Heart right ventricle (tissue), 16 donors: ENCODE measurements at regions of chr11 and their contacts with region 1.

Region 1: DNA sequence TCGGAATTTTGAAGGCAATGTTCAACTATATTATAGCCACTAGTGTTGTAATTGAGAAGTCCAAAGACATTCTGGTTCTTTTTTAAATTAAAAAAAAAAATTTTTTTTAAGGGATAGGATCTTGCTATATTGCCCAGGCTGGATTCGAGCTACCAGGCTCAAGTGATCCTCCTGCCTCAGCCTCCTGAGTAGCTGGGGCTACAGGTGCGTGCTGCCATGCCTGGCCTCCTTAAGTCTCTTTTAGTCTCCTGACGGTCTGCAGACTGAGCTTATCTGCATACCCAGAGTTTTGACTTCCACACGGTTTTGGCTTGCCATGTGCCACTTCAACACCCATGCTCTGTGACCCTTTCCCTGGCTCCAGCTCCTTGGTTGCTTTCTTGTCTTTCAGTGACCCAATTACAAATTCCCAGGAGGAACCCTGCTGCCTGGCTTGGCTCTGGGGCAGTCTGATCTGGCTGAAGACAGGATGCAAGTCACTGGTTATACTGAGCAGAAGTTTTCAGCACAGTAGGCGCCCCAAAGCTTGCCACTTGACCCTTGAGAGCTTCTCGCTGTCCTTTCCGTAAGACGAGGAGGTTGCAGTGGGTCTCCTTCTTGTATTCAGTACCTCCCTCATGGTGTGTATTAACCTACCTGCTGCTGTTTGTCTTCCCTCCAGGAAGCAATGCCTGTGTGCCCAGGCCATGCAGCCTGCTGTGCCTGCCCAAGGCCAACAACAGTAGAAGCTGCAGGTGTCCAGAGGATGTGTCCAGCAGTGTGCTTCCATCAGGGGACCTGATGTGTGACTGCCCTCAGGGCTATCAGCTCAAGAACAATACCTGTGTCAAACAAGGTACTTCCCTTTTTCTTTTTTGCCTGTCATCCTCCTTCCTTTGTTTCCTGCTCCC is 113.8 kb upstream of the SORL1-AS1 start:
- DNase-seq: no peak
- ATAC-seq: no peak
- H3K4me3 ChIP-seq: no peak overlapping the region
- H3K27ac ChIP-seq: no peak overlapping the region
- H3K4me1 ChIP-seq: no peaks in the 10 kb centered on the region
- H3K27me3 ChIP-seq: no peaks in the 10 kb centered on the region
- CTCF ChIP-seq: no peak

Region 2: DNA sequence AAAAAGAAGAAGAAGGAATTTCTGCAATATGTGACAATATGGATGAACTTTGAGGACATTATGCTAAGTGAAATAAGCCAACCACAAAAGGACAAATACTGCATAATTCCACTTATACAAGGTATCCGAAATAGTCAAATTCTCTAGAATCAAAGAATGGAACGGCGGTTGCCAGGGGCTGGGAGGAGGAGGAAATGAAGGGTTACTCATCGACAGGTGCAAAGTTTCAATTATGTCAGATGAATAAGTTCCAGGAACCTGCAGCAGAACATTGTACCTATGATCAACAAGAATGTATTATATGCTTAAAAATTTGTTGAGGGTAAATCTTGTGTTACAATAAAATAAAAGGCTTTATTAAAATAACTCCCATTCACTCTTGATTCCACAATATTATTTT is 224.9 kb before region 1 on chr11:
- intact Hi-C with region 1: no loop called
- DNase-seq: no peak
- ATAC-seq: no peak
- H3K4me3 ChIP-seq: no peak overlapping the region
- H3K27ac ChIP-seq: no peak overlapping the region
- H3K4me1 ChIP-seq: peaks cover 0 to 35% (median 7%) of the 10 kb centered on the region in 9 donors
- H3K27me3 ChIP-seq: peaks cover 0 to 6% (median 0%) of the 10 kb centered on the region in 7 donors
- CTCF ChIP-seq: no peak

Region 3: DNA sequence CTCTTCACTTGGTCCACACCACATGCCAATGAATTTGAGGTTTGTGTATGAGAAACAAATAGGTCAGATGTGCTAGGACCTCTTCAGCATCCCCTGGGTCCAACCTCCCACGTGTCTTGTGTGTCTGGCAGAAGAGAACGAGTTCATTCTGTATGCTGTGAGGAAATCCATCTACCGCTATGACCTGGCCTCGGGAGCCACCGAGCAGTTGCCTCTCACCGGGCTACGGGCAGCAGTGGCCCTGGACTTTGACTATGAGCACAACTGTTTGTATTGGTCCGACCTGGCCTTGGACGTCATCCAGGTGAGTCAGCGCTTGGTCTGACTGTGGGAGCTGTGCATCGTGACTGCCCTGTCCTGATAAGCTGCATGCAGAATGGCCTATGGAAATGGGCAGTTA is 12.7 kb before region 1 on chr11:
- intact Hi-C with region 1: loop called in 1 of 10 experiments (anchors 2 kb)
- DNase-seq: no peak
- ATAC-seq: peak in 1 of 8 donors; percentile 10
- H3K4me3 ChIP-seq: no peak overlapping the region
- H3K27ac ChIP-seq: no peak overlapping the region
- H3K4me1 ChIP-seq: no peaks in the 10 kb centered on the region
- H3K27me3 ChIP-seq: no peaks in the 10 kb centered on the region
- CTCF ChIP-seq: no peak